SK-N-SH (cell line): ENCODE measurements at regions of chr2 and their contacts with region 1.

Region 1: DNA sequence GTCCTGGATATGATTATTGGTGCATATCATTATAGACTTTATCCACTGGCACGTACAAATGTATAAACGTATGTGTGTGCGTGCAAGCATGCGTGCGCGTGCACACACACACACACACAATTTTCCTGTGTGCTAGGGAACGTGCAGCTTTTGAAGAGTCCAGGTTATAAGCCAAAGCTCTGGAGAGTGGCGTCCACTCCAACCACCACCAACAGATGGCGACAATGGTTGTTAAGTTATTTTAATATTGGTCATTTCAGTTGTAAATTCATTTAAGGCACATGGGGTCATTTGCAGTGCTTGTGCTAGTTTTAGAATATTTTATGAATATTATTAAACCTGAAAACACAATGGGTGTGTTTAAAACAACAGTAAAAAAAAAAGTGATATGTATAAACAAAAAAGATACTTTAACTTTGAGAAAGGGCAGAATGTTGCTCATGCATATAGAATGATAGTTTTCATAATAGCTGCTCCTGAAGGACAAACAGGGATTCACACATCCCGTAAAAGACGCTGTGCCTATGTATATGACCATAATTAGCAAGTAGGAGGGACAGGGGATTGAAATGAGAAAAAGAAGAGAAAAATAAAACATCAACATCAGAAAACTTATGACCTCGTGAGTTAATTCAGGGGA is 124.2 kb upstream of the ITGB6 start:
- DNase-seq: peak; percentile 39
- H3K4me3 ChIP-seq: no peak overlapping the region
- H3K27ac ChIP-seq: 0 out of 4 replicates have a peak overlapping the region, but pooled peaks of 1 of the 2 experiments have one; percentile 20
- H3K4me1 ChIP-seq: peaks cover 0 to 3% of the 10 kb centered on the region in 2 experiments; a peak in 3 of 4 replicates
- H3K27me3 ChIP-seq: no peaks in the 10 kb centered on the region
- CTCF ChIP-seq: peak; percentile 81
- EP300 ChIP-seq: no peak
- RAD21 ChIP-seq: peak; percentile 80

Region 2: GRCh38 chr2:160489111-160489510 is 164.8 kb after region 1 on chr2:
- CTCF ChIA-PET with region 1: interaction called, 13 read pairs
- POLR2A ChIA-PET with region 1: no interaction called
- DNase-seq: no peak
- H3K4me3 ChIP-seq: no peak overlapping the region
- H3K27ac ChIP-seq: peak overlapping the region in 1 of 2 experiments; percentile 11; a peak in 1 of 4 replicates
- H3K4me1 ChIP-seq: peaks cover 26 to 37% of the 10 kb centered on the region in 2 experiments; a peak in 3 of 4 replicates
- H3K27me3 ChIP-seq: no peaks in the 10 kb centered on the region
- CTCF ChIP-seq: no peak
- EP300 ChIP-seq: no peak
- RAD21 ChIP-seq: no peak

Region 3: GRCh38 chr2:160635488-160635887 is 311.2 kb after region 1 on chr2:
- CTCF ChIA-PET with region 1: no interaction called
- POLR2A ChIA-PET with region 1: no interaction called
- DNase-seq: no peak
- H3K4me3 ChIP-seq: no peak overlapping the region
- H3K27ac ChIP-seq: no peak overlapping the region
- H3K4me1 ChIP-seq: peaks cover 0 to 17% of the 10 kb centered on the region in 2 experiments; a peak in 3 of 4 replicates
- H3K27me3 ChIP-seq: no peaks in the 10 kb centered on the region
- CTCF ChIP-seq: no peak
- EP300 ChIP-seq: no peak
- RAD21 ChIP-seq: no peak